GM12878 (cell line): ENCODE measurements at regions of chr2 and their contacts with region 1.

Region 1: DNA sequence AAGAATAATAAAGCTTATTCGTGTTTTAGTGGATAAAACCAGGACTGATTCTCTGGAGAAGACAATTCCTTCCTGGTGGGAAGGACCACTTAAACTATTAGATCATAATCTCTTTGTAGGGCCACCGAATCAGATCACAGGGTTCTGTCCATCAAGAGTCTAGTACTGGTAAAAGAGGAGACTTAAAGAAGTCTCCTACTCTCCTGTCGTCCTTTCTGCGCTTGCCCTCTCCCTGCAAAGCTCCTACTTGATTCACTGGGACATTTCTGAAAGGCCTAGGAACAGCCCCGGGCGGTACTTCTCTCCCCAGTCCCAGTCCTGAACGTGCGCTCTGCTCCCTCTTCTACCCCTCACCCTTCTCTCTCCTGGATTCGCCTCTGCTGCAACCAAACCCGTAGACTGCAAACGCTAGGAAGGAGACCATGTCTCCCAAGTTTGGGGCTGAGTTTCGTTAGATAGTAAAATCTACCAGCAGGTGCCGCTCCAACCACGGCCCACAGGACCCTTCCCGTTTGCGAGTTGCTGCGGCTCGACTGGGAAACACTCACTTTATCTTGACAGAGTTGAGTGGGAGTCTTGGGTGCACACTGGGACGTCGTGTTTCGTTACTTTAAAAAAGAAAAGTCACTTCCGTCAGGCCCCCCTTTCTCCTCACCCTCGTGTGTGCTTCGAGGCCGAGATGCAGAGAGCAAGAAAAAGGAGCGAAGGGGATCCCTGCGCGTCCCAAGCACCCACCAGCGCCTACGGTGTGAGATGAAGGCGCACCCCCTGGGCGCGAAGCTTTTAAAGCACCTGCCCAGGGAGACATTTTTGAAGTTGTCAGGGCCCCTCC is 923 bp downstream of the FIGLA start:
- DNase-seq: no peak
- ATAC-seq: peak; percentile 76
- H3K4me3 ChIP-seq: no peak overlapping the region
- H3K27ac ChIP-seq: no peak overlapping the region
- H3K4me1 ChIP-seq: no peaks in the 10 kb centered on the region
- H3K27me3 ChIP-seq: peaks cover 5 to 10% of the 10 kb centered on the region in 2 experiments
- CTCF ChIP-seq: peak; percentile 52 to 65 (median 64); a peak in 5 of 6 replicates
- EP300 ChIP-seq: no peak
- POLR2A ChIP-seq: no peak
- RAD21 ChIP-seq: peak; percentile 69

Region 2: DNA sequence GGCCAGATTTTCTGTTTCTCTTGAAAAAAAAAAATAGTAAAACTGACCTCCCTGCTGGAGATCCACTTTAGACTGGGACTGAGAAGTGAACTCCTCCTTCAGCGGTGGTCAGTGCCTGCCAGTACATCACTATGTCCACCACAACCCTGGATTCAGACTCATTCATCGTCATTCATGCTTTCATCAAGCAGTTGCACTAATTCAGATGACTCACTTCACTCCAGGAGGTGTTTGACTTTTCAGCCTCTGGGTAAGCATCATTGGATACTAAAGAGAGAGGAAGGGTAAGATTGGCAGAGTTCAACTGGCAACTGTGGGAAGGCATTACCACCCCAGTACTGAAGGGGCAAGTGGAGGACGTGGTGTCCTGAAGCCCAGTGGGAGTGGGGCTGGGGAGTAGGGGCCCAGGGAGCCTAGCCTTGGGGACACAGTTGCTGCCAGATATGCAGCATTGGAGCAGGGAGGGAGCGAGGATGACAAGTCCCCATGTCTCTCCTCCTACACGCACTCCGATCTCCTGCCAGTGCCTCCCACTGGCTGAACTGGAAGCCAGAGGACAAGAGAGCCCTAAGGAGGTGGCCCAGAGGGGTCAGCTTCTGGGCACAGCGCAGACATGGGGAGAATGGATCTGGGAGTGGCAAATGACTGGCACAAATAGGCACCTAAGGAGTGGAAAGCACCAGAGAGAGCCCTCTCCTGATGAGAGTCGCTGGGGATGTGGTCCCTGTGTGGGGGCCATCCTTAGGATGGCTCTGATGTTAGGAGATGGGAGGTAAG is 347.0 kb before region 1 on chr2:
- CTCF ChIA-PET with region 1: no interaction called
- POLR2A ChIA-PET with region 1: no interaction called
- RAD21 ChIA-PET with region 1: no interaction called
- SMC1A ChIA-PET with region 1: no interaction called
- in situ Hi-C with region 1: no loop called
- intact Hi-C with region 1: no loop called
- DNase-seq: no peak
- ATAC-seq: no peak
- H3K4me3 ChIP-seq: no peak overlapping the region
- H3K27ac ChIP-seq: no peak overlapping the region
- H3K4me1 ChIP-seq: no peaks in the 10 kb centered on the region
- H3K27me3 ChIP-seq: no peaks in the 10 kb centered on the region; a peak in 1 of 4 replicates
- CTCF ChIP-seq: no peak
- EP300 ChIP-seq: no peak
- POLR2A ChIP-seq: no peak
- RAD21 ChIP-seq: no peak

Region 3: GRCh38 chr2:70656421-70657010 is 133.0 kb before region 1 on chr2:
- CTCF ChIA-PET with region 1: no interaction called
- POLR2A ChIA-PET with region 1: no interaction called
- RAD21 ChIA-PET with region 1: interaction called, 3 read pairs
- SMC1A ChIA-PET with region 1: no interaction called
- in situ Hi-C with region 1: no loop called
- intact Hi-C with region 1: loop called (anchors 2 kb)
- DNase-seq: no peak
- ATAC-seq: no peak
- H3K4me3 ChIP-seq: no peak overlapping the region
- H3K27ac ChIP-seq: no peak overlapping the region
- H3K4me1 ChIP-seq: no peaks in the 10 kb centered on the region
- H3K27me3 ChIP-seq: peaks cover 0 to 2% of the 10 kb centered on the region in 2 experiments; a peak in 3 of 4 replicates
- CTCF ChIP-seq: no peak
- EP300 ChIP-seq: no peak
- POLR2A ChIP-seq: no peak
- RAD21 ChIP-seq: no peak

Region 4: GRCh38 chr2:70686577-70687460 is 102.7 kb before region 1 on chr2:
- CTCF ChIA-PET with region 1: interaction called, 4 read pairs
- POLR2A ChIA-PET with region 1: no interaction called
- RAD21 ChIA-PET with region 1: no interaction called
- SMC1A ChIA-PET with region 1: no interaction called
- in situ Hi-C with region 1: no loop called
- intact Hi-C with region 1: loop called (anchors 10 kb)
- DNase-seq: no peak
- ATAC-seq: peak; percentile 92
- H3K4me3 ChIP-seq: no peak overlapping the region
- H3K27ac ChIP-seq: no peak overlapping the region
- H3K4me1 ChIP-seq: no peaks in the 10 kb centered on the region
- H3K27me3 ChIP-seq: no peaks in the 10 kb centered on the region
- CTCF ChIP-seq: peak; percentile 38 to 52 (median 46); a peak in 4 of 6 replicates
- EP300 ChIP-seq: no peak
- POLR2A ChIP-seq: no peak
- RAD21 ChIP-seq: peak; percentile 37; the same call in 1 of the 2 replicates

Region 5: GRCh38 chr2:70861777-70862625 is 72.5 kb after region 1 on chr2:
- CTCF ChIA-PET with region 1: interaction called, 7 read pairs
- POLR2A ChIA-PET with region 1: no interaction called
- RAD21 ChIA-PET with region 1: no interaction called
- SMC1A ChIA-PET with region 1: no interaction called
- in situ Hi-C with region 1: no loop called
- intact Hi-C with region 1: loop called (anchors 5 kb)
- DNase-seq: no peak
- ATAC-seq: peak; percentile 90
- H3K4me3 ChIP-seq: no peak overlapping the region
- H3K27ac ChIP-seq: no peak overlapping the region
- H3K4me1 ChIP-seq: no peaks in the 10 kb centered on the region
- H3K27me3 ChIP-seq: peaks cover 0 to 2% of the 10 kb centered on the region in 2 experiments; a peak in 3 of 4 replicates
- CTCF ChIP-seq: peak; percentile 93 to 98 (median 93); a peak in 5 of 6 replicates
- EP300 ChIP-seq: no peak
- POLR2A ChIP-seq: no peak
- RAD21 ChIP-seq: peak; percentile 81

Region 6: GRCh38 chr2:70919672-70920366 is 130.3 kb after region 1 on chr2:
- CTCF ChIA-PET with region 1: interaction called, 4 read pairs
- POLR2A ChIA-PET with region 1: no interaction called
- RAD21 ChIA-PET with region 1: no interaction called
- SMC1A ChIA-PET with region 1: no interaction called
- in situ Hi-C with region 1: no loop called
- intact Hi-C with region 1: loop called (anchors 2 kb)
- DNase-seq: no peak
- ATAC-seq: peak; percentile 92
- H3K4me3 ChIP-seq: no peak overlapping the region
- H3K27ac ChIP-seq: no peak overlapping the region
- H3K4me1 ChIP-seq: no peaks in the 10 kb centered on the region
- H3K27me3 ChIP-seq: peaks cover 0 to 3% of the 10 kb centered on the region in 2 experiments; a peak in 2 of 4 replicates
- CTCF ChIP-seq: peak; percentile 85 to 90 (median 88)
- EP300 ChIP-seq: no peak
- POLR2A ChIP-seq: no peak
- RAD21 ChIP-seq: peak; percentile 71